A549 (cell line): ENCODE measurements at regions of chr10 and their contacts with region 1.

Region 1: DNA sequence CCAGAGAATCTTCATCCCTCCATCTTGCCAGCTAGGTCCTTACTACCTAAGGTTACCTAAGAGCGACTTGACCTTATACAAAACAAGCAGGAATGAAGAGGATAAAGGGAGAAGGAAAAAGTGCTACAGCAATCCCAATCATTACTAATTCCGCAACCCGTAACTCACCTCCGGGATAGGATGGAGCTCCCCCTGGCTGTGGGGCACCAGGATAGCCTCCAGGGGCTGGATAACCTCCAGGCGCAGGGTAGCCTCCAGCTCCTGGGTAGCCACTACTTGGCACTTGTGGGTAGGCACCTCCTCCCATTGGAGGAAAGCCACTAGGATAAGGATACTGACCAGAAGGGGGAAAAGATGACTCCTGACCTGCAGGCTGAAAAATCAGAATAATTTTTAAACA is 15.8 kb downstream of the ANXA7 start:
- DNase-seq: peak; percentile 28 to 29
- ATAC-seq: peak; percentile 81 to 84
- H3K4me3 ChIP-seq: no peak overlapping the region
- H3K27ac ChIP-seq: no peak overlapping the region
- H3K4me1 ChIP-seq: no peaks in the 10 kb centered on the region
- CTCF ChIP-seq: peak; percentile 35
- EP300 ChIP-seq: no peak
- POLR2A ChIP-seq: no peak
- RAD21 ChIP-seq: 0 out of 5 replicates have a peak, but pooled peaks of 1 of the 2 experiments have one; percentile 14

Region 2: DNA sequence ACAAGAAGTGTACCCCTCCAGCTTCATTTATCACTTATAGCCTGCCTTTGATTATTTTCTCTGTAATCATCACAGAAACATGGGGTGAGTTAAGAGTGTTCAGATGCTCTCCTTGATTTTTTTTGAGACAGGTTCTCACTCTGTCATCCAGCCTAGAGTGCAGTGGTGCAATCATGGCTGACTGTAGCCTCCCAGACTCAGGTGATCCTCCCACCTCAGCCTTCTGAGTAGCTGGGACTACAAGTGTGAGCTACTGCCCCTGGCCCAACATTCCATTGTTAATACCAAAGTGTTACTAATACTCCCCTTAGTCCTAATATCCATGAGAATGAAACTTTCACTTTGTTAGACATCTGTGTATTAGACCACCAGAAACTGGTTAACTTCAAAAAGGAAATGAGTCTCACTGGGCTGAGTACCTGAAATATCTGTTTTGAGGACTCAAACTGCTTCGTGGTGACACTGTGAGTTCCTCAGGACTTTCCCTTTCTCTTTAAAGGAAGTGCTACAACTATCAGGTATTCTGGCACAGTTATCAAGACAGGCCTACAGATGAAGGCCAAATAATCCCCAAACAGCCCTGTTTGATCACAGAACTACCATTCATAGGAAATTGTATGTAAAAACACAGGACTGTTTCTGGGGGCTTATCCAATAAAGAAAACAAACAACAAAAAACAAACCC is 18.8 kb before region 1 on chr10:
- CTCF ChIA-PET with region 1: no interaction called
- POLR2A ChIA-PET with region 1: no interaction called
- DNase-seq: no peak
- ATAC-seq: no peak
- H3K4me3 ChIP-seq: no peak overlapping the region
- H3K27ac ChIP-seq: no peak overlapping the region
- H3K4me1 ChIP-seq: no peaks in the 10 kb centered on the region
- CTCF ChIP-seq: no peak
- EP300 ChIP-seq: no peak
- POLR2A ChIP-seq: no peak
- RAD21 ChIP-seq: no peak

Region 3: GRCh38 chr10:73413528-73414229 is 15.7 kb after region 1 on chr10 and contains the start of gene ANXA7:
- CTCF ChIA-PET with region 1: interaction called, 4 read pairs
- POLR2A ChIA-PET with region 1: interaction called, 11 read pairs
- DNase-seq: peak; percentile 88 to 98
- ATAC-seq: peak; percentile 95 to 98
- H3K4me3 ChIP-seq: peak within 1 kb of the TSS; percentile 76
- H3K27ac ChIP-seq: peak within 1 kb of the TSS; percentile 88 to 98
- H3K4me1 ChIP-seq: peaks cover 27% of the 10 kb centered on the region; the same call in 2 of the 3 replicates
- CTCF ChIP-seq: peak; percentile 24; the same call in 1 of the 3 replicates
- EP300 ChIP-seq: no peak
- POLR2A ChIP-seq: peak; percentile 62
- RAD21 ChIP-seq: no peak
- polyA plus RNA-seq, gene ANXA7: 150 and 161 TPM in 2 replicates

Region 4: DNA sequence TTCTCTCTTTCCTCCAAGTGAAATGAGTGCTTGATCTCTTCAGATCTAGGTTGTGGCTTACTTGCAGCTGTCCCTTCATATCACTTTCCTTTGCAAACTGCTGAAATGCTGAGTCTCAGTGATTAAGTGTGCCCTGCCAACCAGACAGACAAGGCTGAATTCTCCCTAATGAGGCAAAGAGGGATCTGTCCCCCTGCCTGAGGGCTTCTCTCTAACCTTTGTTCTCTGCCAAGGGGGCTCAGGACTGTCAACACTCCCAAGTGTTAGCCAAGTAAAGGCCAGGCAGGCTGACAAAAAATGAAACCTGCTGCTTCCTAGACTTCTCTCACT is 35.5 kb after region 1 on chr10 and contains the start of gene MSS51:
- CTCF ChIA-PET with region 1: no interaction called
- POLR2A ChIA-PET with region 1: no interaction called
- DNase-seq: no peak
- ATAC-seq: no peak
- H3K4me3 ChIP-seq: no peak within 1 kb of the TSS
- H3K27ac ChIP-seq: no peak within 1 kb of the TSS
- H3K4me1 ChIP-seq: no peaks in the 10 kb centered on the region
- CTCF ChIP-seq: no peak
- EP300 ChIP-seq: no peak
- POLR2A ChIP-seq: no peak
- RAD21 ChIP-seq: no peak
- polyA plus RNA-seq, gene MSS51: 1.1 TPM in 2 replicates